ENCODE measurements at regions of chr2 and their contacts with region 1.

Region 1: GRCh38 chr2:230614913-230615332 is 97.7 kb upstream of the CAB39 start:
- DNase-seq: peak; percentile 62
- H3K4me3 ChIP-seq: no peak overlapping the region
- H3K27ac ChIP-seq: peak overlapping the region; percentile 30
- H3K4me1 ChIP-seq: peaks cover 12% of the 10 kb centered on the region
- H3K27me3 ChIP-seq: no peaks in the 10 kb centered on the region
- CTCF ChIP-seq: no peak

Region 2: GRCh38 chr2:229800997-229801754 is 813.7 kb before region 1 on chr2:
- CTCF ChIA-PET with region 1: no interaction called
- dilution Hi-C with region 1: no loop called
- in situ Hi-C with region 1: loop called in 1 of 2 experiments (anchors 10 kb)
- intact Hi-C with region 1: loop called (anchors 2 kb)
- DNase-seq: peak; percentile 35
- H3K4me3 ChIP-seq: no peak overlapping the region
- H3K27ac ChIP-seq: peak overlapping the region; percentile 47
- H3K4me1 ChIP-seq: peaks cover 10% of the 10 kb centered on the region
- H3K27me3 ChIP-seq: no peaks in the 10 kb centered on the region
- CTCF ChIP-seq: peak; percentile 78 to 79

Region 3: GRCh38 chr2:230007931-230008707 is 606.8 kb before region 1 on chr2:
- CTCF ChIA-PET with region 1: no interaction called
- dilution Hi-C with region 1: no loop called
- in situ Hi-C with region 1: loop called (anchors 5 kb)
- intact Hi-C with region 1: loop called (anchors 1 kb)
- DNase-seq: peak; percentile 47
- H3K4me3 ChIP-seq: no peak overlapping the region
- H3K27ac ChIP-seq: no peak overlapping the region
- H3K4me1 ChIP-seq: no peaks in the 10 kb centered on the region
- H3K27me3 ChIP-seq: no peaks in the 10 kb centered on the region
- CTCF ChIP-seq: peak; percentile 75 to 82

Region 4: GRCh38 chr2:230160112-230160660 is 454.7 kb before region 1 on chr2:
- CTCF ChIA-PET with region 1: no interaction called
- dilution Hi-C with region 1: no loop called
- in situ Hi-C with region 1: no loop called
- intact Hi-C with region 1: loop called (anchors 1 kb)
- DNase-seq: peak; percentile 37
- H3K4me3 ChIP-seq: no peak overlapping the region
- H3K27ac ChIP-seq: no peak overlapping the region
- H3K4me1 ChIP-seq: no peaks in the 10 kb centered on the region
- H3K27me3 ChIP-seq: no peaks in the 10 kb centered on the region
- CTCF ChIP-seq: peak; percentile 65 to 75

Region 5: GRCh38 chr2:230411570-230412370 is 203.2 kb before region 1 on chr2:
- CTCF ChIA-PET with region 1: no interaction called
- dilution Hi-C with region 1: no loop called
- in situ Hi-C with region 1: no loop called
- intact Hi-C with region 1: loop called (anchors 5 kb)
- DNase-seq: peak; percentile 58
- H3K4me3 ChIP-seq: peak overlapping the region; percentile 59 to 78 (median 60)
- H3K27ac ChIP-seq: peak overlapping the region; percentile 42
- H3K4me1 ChIP-seq: peaks cover 30% of the 10 kb centered on the region
- H3K27me3 ChIP-seq: no peaks in the 10 kb centered on the region
- CTCF ChIP-seq: no peak

Region 6: GRCh38 chr2:230712443-230713330 is 97.8 kb after region 1 on chr2 and contains the start of gene CAB39:
- CTCF ChIA-PET with region 1: no interaction called
- dilution Hi-C with region 1: no loop called
- in situ Hi-C with region 1: no loop called
- intact Hi-C with region 1: loop called (anchors 1 kb)
- DNase-seq: peak; percentile 84
- H3K4me3 ChIP-seq: peak within 1 kb of the TSS; percentile 70 to 86 (median 84)
- H3K27ac ChIP-seq: peak within 1 kb of the TSS; percentile 79
- H3K4me1 ChIP-seq: peaks cover 20% of the 10 kb centered on the region
- H3K27me3 ChIP-seq: no peaks in the 10 kb centered on the region
- CTCF ChIP-seq: peak; percentile 55
- total RNA-seq, gene CAB39: 68.3 to 115 TPM

Region 7: DNA sequence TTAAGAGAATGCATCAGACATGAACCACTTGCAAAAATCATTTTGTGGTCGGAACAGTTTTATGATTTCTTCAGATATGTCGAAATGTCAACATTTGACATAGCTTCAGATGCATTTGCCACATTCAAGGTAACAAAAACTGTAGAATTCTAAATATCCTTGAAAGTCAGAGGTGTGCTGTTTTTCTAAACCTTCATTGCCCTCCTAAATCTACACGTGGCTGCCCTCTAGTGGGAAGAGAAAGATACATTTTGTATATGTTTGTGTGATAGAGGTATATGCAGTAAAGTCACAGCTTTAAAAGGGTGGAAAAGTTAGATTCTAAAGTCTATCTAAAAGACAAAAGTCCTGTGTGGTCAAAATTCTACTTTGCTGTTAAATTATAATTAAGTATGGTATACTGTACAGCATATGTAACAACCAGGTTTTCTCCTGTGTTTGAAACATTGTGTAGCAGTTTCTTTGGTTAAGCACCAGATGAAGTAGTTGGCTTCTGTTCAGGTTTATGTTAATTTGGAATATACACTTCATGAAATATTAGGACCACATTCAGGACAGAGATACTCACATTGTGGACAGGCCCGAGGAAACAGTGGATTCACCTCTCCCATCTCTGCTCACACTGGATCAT is 184.0 kb after region 1 on chr2:
- CTCF ChIA-PET with region 1: no interaction called
- dilution Hi-C with region 1: no loop called
- in situ Hi-C with region 1: no loop called
- intact Hi-C with region 1: loop called (anchors 1 kb)
- DNase-seq: peak; percentile 51
- H3K4me3 ChIP-seq: no peak overlapping the region
- H3K27ac ChIP-seq: no peak overlapping the region
- H3K4me1 ChIP-seq: peaks cover 45% of the 10 kb centered on the region
- H3K27me3 ChIP-seq: no peaks in the 10 kb centered on the region
- CTCF ChIP-seq: peak; percentile 70 to 72

Region 8: DNA sequence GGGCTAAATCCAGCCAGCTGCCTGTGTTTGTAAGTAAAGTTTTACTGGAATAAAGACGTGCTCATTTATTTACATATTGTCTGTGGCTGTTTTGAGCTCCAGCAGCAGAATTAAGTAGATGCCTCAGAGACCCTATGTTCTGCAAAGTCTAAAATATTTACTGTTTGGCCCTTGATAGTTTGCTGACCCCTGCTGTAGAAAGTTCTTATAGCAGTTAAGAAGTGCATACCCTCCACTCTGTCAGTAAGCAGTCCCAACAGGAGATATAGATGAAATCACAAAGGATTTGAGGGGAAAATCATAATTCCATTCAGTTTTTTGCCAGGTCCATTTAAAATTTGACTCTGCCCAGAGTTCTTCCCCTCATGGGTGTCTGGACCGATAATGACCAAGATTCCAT is 199.7 kb after region 1 on chr2:
- CTCF ChIA-PET with region 1: no interaction called
- dilution Hi-C with region 1: no loop called
- in situ Hi-C with region 1: no loop called
- intact Hi-C with region 1: no loop called
- DNase-seq: no peak
- H3K4me3 ChIP-seq: no peak overlapping the region
- H3K27ac ChIP-seq: no peak overlapping the region
- H3K4me1 ChIP-seq: no peaks in the 10 kb centered on the region
- H3K27me3 ChIP-seq: no peaks in the 10 kb centered on the region
- CTCF ChIP-seq: peak; percentile 45 to 47

Measured in mammary epithelial cell (primary cell).